ENCODE measurements at regions of chr7 and their contacts with region 1.

Region 1: DNA sequence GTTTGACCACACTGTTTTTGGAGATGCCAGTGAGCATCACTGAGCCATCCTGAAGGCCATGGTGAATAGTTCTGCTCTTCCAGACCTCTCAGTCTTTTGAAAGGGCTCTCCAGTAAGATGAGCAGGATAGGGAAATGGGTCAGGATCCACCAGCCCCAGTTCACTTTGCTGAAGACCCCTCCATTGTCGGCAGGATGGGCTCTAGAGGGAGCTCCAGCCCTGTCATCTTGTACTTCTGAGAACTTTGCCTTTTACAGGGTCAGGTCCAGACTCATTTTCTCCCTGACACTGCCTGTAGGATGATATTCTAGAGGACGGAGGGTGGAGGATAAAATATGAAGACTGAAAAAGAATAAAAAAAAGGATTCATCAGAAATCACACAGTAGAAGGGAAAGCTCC is 13.1 kb downstream of the LHFPL3 start:
- DNase-seq: peak; percentile 25
- ATAC-seq: peak; percentile 86
- H3K4me3 ChIP-seq: no peak overlapping the region
- H3K27ac ChIP-seq: no peak overlapping the region
- H3K4me1 ChIP-seq: no peaks in the 10 kb centered on the region
- H3K27me3 ChIP-seq: no peaks in the 10 kb centered on the region
- CTCF ChIP-seq: peak; percentile 61
- EP300 ChIP-seq: no peak
- POLR2A ChIP-seq: no peak
- RAD21 ChIP-seq: peak; percentile 23; the same call in 1 of the 2 replicates

Region 2: DNA sequence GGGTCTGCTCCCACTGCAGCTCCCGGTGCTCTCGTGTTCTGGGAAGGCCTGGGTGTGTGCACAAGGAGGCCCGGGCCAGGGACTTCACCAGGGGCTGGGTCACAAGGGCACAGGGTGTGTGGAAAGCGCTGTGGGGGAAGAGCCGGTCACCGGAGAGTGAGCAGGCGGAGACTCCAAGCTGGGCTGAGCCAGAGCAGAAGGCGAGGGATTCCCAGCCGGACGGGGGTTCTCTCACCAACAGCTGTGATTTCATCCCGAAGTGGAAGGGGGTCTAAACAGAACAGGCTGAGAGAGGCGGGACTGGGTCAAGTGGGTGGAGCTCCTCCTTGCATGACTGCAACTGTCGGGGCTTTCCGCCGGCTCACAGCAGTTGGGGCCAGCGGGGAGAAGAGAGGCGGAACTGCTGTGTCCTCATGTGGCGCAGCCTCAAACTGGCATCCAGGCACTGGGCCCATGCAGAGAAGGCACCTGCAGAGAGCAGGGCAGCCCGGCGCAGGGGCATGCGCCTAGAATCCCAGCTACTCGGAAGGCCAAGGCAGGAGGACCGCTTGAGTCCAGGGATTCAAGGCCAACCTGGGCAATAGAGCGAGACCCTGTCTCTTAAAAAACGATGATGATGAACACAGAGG is 1915.8 kb before region 1 on chr7:
- CTCF ChIA-PET with region 1: no interaction called
- POLR2A ChIA-PET with region 1: no interaction called
- in situ Hi-C with region 1: no loop called
- intact Hi-C with region 1: no loop called
- DNase-seq: no peak
- ATAC-seq: no peak
- H3K4me3 ChIP-seq: no peak overlapping the region
- H3K27ac ChIP-seq: no peak overlapping the region
- H3K4me1 ChIP-seq: no peaks in the 10 kb centered on the region
- H3K27me3 ChIP-seq: no peaks in the 10 kb centered on the region
- CTCF ChIP-seq: no peak
- EP300 ChIP-seq: no peak
- POLR2A ChIP-seq: no peak
- RAD21 ChIP-seq: no peak

Region 3: GRCh38 chr7:104272767-104273384 is 68.7 kb before region 1 on chr7:
- CTCF ChIA-PET with region 1: no interaction called
- POLR2A ChIA-PET with region 1: no interaction called
- in situ Hi-C with region 1: no loop called
- intact Hi-C with region 1: no loop called
- DNase-seq: peak; percentile 36
- ATAC-seq: peak; percentile 40; the same call in 2 of the 3 replicates
- H3K4me3 ChIP-seq: no peak overlapping the region
- H3K27ac ChIP-seq: no peak overlapping the region
- H3K4me1 ChIP-seq: peaks cover 5% of the 10 kb centered on the region; the same call in 1 of the 2 replicates
- H3K27me3 ChIP-seq: no peaks in the 10 kb centered on the region
- CTCF ChIP-seq: peak; percentile 60
- EP300 ChIP-seq: no peak
- POLR2A ChIP-seq: no peak
- RAD21 ChIP-seq: no peak

Region 4: DNA sequence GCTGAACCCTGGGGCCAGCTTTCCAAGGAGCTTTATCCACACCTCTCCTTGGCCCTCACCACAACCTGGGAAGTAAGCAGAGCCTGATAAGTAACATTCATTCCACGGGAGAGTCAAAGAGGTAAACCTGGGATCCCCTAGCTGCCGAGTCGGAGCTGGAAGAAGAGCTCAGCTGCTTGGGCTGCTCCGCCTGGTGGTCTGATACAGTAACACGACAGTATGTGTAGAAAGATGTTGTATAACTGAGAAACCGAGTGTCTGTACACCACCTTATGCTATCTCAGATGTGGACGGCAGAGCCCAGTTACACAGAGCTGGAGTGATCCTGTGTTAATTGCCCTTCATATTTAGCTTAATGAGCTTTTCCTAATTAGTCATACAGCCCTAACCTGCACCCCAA is 521.2 kb after region 1 on chr7:
- CTCF ChIA-PET with region 1: no interaction called
- POLR2A ChIA-PET with region 1: no interaction called
- in situ Hi-C with region 1: no loop called
- intact Hi-C with region 1: loop called (anchors 5 kb)
- DNase-seq: peak; percentile 35
- ATAC-seq: peak; percentile 94
- H3K4me3 ChIP-seq: no peak overlapping the region
- H3K27ac ChIP-seq: no peak overlapping the region
- H3K4me1 ChIP-seq: no peaks in the 10 kb centered on the region
- H3K27me3 ChIP-seq: peaks cover 0 to 11% of the 10 kb centered on the region in 2 experiments; a peak in 2 of 5 replicates
- CTCF ChIP-seq: peak; percentile 47
- EP300 ChIP-seq: no peak
- POLR2A ChIP-seq: no peak
- RAD21 ChIP-seq: no peak